Posterior vena cava (tissue), 2 donors: ENCODE measurements at regions of chr1 and their contacts with region 1.

Region 1: GRCh38 chr1:240691521-240692338 is 79.8 kb upstream of the GREM2 start:
- DNase-seq: peak; percentile 86

Region 2: GRCh38 chr1:240044620-240045019 is 647.1 kb before region 1 on chr1:
- intact Hi-C with region 1: loop called in 1 of 2 experiments (anchors 5 kb)
- DNase-seq: no peak

Region 3: GRCh38 chr1:240190881-240191401 is 500.8 kb before region 1 on chr1:
- intact Hi-C with region 1: loop called in 1 of 2 experiments (anchors 10 kb)
- DNase-seq: no peak